ENCODE measurements at regions of chr10 and their contacts with region 1.

Region 1: GRCh38 chr10:71888623-71889387 is 37.8 kb upstream of the PSAP start:
- DNase-seq: peak; percentile 96
- H3K4me3 ChIP-seq: peak overlapping the region; percentile 35 to 59 (median 52)
- H3K27ac ChIP-seq: peak overlapping the region; percentile 78 to 92 (median 84)
- H3K4me1 ChIP-seq: peaks cover 0 to 21% (median 17%) of the 10 kb centered on the region in 4 donors
- H3K27me3 ChIP-seq: no peaks in the 10 kb centered on the region
- CTCF ChIP-seq: no peak
- EP300 ChIP-seq: peak in 2 of 4 donors; percentile 50 to 88
- POLR2A ChIP-seq: no peak

Region 2: GRCh38 chr10:71647526-71648253 is 241.1 kb before region 1 on chr10:
- intact Hi-C with region 1: no loop called
- DNase-seq: no peak
- H3K4me3 ChIP-seq: no peak overlapping the region
- H3K27ac ChIP-seq: no peak overlapping the region
- H3K4me1 ChIP-seq: no peaks in the 10 kb centered on the region
- H3K27me3 ChIP-seq: no peaks in the 10 kb centered on the region
- CTCF ChIP-seq: peak in 2 of 4 experiments; percentile 12 to 14
- EP300 ChIP-seq: no peak
- POLR2A ChIP-seq: no peak

Region 3: DNA sequence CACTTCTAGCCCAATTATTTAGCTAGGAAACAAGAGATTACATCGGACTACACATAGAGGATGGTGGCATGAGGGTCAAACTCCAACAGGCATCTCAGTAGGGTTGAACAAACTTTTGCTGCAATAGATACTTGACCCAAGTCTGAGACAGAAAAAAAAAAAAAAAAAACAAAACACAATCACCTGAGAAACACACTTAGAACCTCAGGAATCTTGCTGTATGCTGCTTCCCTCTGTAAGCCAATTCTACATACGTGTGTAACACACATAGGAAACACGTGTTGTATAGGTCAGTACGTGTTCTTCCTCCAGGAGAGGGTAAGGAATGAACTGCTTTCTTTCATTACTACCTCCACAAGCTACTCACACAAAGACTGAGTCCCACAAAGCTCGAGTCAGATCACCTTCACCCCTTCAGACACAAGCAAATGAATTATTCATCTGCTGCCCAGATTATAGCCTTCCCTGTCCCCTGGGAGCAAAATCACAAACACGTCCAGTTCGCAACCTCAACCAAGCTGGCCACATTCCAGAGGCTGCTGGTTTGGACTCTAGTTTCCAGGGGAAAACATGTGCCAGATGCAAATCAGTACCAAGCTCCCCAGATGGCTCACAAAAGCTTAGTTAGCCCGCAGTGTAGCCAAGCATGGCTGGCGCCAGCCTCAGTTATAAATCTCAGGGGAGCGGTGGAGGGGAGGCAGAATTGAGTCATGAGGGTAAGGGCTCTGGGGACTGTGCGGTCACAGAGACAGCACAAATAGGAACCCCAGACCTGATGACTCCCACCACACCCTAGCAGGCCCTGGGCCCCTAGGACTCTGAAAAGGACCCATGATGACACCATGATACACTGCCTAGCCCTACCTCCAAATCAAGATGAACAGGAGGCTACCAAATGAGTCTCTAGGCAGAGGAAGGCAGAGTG is 52.9 kb before region 1 on chr10:
- intact Hi-C with region 1: loop called (anchors 10 kb)
- DNase-seq: peak; percentile 87
- H3K4me3 ChIP-seq: no peak overlapping the region
- H3K27ac ChIP-seq: peak overlapping the region; percentile 60 to 73 (median 70)
- H3K4me1 ChIP-seq: peaks cover 0 to 82% (median 65%) of the 10 kb centered on the region in 4 donors
- H3K27me3 ChIP-seq: no peaks in the 10 kb centered on the region
- CTCF ChIP-seq: peak in 1 of 4 experiments; percentile 5
- EP300 ChIP-seq: no peak
- POLR2A ChIP-seq: no peak

Region 4: DNA sequence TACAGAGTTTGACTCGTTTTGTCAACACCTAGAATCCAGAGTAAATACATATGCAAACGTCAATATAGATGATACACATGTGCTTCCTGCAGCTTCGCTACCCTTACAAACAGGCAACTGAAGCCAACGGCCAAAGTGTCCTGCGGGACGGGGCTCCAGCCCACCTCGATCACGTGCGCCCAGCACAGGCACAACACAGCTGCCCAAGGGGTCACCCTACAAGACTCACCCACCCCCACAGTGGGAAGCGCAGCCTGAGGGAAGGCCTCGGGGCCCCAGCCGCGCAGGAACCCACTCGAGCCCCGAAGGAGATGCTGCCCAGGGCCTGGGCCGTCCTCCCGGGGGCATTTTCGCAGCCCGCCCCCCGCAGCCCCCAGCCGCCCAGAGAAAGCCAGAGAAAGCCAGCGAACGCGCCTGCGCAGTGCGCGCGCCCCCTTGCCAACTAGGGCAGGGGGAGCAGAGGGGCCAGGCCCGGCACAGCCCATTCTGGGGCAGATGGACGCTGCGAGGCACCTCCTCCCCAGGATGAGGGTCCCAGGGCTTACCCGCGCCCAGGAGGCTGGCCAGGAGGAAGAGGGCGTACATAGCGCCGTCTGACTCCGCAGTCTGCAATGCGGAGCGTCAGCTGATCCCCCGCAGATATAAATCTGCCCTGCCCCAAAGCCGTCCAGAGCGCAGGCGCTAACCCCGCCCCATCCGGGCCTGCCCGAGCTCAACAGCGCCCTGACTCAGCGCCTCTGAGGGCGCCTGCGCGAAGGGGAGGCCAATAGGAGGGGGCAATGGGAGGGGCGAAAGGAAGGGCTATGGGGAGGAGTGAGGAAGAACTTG is 38.0 kb before region 1 on chr10 and contains the start of gene PSAP:
- intact Hi-C with region 1: loop called (anchors 5 kb)
- DNase-seq: peak; percentile 100
- H3K4me3 ChIP-seq: peak within 1 kb of the TSS; percentile 83 to 100 (median 98)
- H3K27ac ChIP-seq: peak within 1 kb of the TSS; percentile 92 to 99 (median 98)
- H3K4me1 ChIP-seq: peaks cover 0 to 50% (median 44%) of the 10 kb centered on the region in 4 donors
- H3K27me3 ChIP-seq: no peaks in the 10 kb centered on the region
- CTCF ChIP-seq: no peak
- EP300 ChIP-seq: peak in 1 of 4 donors; percentile 65
- POLR2A ChIP-seq: peak; percentile 96 to 99
- total RNA-seq, gene PSAP: 624 to 671 (median 644) TPM

Region 5: DNA sequence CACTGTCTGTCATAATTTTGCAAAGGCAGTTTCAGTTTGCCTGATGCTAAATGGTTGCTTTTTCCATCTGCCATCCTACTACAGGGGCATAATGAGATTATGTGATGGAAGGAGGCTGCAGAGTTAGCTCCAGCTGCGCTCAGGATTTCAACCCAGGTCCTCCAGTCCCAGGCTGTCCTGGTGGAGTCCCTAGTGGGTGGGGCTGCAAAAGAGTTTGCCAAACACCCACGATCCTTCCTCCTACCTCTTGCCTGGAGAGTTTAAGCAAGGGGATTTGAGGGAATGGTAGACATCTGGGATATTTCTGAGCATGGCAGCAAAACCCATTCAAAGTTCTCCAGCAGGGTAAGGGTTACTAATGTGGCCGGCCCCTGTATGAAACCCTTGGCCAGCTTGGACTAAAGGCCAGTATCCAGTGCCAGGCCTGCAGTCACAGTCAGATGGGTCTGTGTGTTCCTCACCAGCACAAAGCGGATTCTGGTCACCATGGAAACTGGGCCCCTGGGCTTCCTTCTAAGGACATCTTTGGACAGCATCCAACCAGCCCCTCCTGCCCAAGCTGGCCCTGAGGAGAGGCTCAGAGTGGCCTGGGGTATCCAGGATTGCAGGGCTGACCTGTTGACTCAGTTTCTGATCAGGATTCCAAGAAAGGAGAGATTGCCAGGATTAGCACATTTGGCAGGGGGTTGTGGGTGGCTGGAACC is 32.7 kb after region 1 on chr10:
- intact Hi-C with region 1: no loop called
- DNase-seq: peak; percentile 81
- H3K4me3 ChIP-seq: no peak overlapping the region
- H3K27ac ChIP-seq: peak overlapping the region in 1 of 4 donors; percentile 11
- H3K4me1 ChIP-seq: peaks cover 0 to 10% (median 0%) of the 10 kb centered on the region in 4 donors
- H3K27me3 ChIP-seq: no peaks in the 10 kb centered on the region
- CTCF ChIP-seq: no peak
- EP300 ChIP-seq: no peak
- POLR2A ChIP-seq: no peak

Measured in sigmoid colon (tissue), 7 donors.